Activated CD8-positive, alpha-beta T cell treated with anti-CD3 and anti-CD28 coated beads for 36 hours (primary cell): ENCODE measurements at regions of chr11 and their contacts with region 1.

Region 1: GRCh38 chr11:65095974-65096806 is at the start of gene VPS51:
- DNase-seq: peak; percentile 94
- ATAC-seq: peak; percentile 95
- H3K4me3 Mint-ChIP-seq: peak within 1 kb of the TSS; percentile 93
- H3K27ac Mint-ChIP-seq: peak within 1 kb of the TSS; percentile 96
- H3K4me1 Mint-ChIP-seq: peaks cover 15% of the 10 kb centered on the region
- H3K27me3 Mint-ChIP-seq: no peaks in the 10 kb centered on the region
- CTCF ChIP-seq: no peak
- total RNA-seq, gene VPS51: 103 TPM

Region 2: DNA sequence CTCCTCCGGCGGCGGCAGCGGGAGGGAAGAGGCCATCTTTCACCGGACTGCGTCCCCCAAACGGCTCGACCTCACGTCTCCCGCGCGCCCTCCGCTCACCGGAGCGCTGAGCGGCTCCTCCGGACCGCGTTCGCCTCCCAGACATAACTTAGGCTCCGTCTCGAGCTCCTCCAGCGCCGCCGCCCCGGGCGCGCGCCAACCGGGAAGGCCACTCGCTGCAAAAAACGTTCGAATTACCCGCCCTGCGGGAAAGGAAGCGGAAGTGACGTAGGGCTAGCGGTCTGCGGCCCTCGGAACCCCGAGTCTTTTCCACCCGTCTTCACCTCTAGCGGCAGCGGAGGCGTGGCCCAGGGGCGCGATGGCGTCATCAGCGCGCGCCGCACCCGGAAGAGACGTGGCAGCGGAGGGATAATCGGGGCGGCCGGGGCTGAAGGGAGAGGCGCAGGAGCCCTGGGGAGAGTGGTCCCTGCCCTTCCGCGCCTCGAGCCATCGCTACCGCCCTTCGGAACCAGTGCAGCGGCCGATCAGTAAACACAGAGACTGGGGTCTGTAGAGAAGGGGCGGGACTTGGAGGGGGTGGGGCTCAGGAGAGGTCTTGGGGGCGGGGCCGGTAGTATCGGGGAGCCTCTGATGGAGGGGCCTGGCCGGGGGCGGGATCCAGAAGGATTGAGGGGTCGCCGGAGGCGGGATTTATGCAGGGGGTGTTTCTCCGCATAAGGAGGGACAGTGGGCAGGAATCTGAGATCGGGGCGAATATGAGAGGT is 12.2 kb before region 1 on chr11 and contains the starts of genes CDCA5 and ZFPL1:
- CTCF ChIA-PET with region 1: interaction called, 3 read pairs
- POLR2A ChIA-PET with region 1: interaction called, 24 read pairs
- intact Hi-C with region 1: no loop called
- DNase-seq: peak; percentile 96
- ATAC-seq: peak; percentile 82
- H3K4me3 Mint-ChIP-seq: peak within 1 kb of the TSS; percentile 99
- H3K27ac Mint-ChIP-seq: peak within 1 kb of the TSS; percentile 98
- H3K4me1 Mint-ChIP-seq: peaks cover 35% of the 10 kb centered on the region
- H3K27me3 Mint-ChIP-seq: no peaks in the 10 kb centered on the region
- CTCF ChIP-seq: no peak
- total RNA-seq, gene CDCA5: 112 TPM
- total RNA-seq, gene ZFPL1: 27.1 to 28.2 TPM

Region 3: GRCh38 chr11:65111744-65112414 is 15.7 kb after region 1 on chr11 and contains the start of gene TM7SF2:
- CTCF ChIA-PET with region 1: interaction called, 115 read pairs
- POLR2A ChIA-PET with region 1: interaction called, 294 read pairs
- intact Hi-C with region 1: no loop called
- DNase-seq: peak; percentile 98
- ATAC-seq: peak; percentile 77
- H3K4me3 Mint-ChIP-seq: peak within 1 kb of the TSS; percentile 86
- H3K27ac Mint-ChIP-seq: peak within 1 kb of the TSS; percentile 84
- H3K4me1 Mint-ChIP-seq: peaks cover 43% of the 10 kb centered on the region
- H3K27me3 Mint-ChIP-seq: no peaks in the 10 kb centered on the region
- CTCF ChIP-seq: no peak
- total RNA-seq, gene TM7SF2: 12.4 to 17.5 TPM

Region 4: GRCh38 chr11:65117216-65118096 is 21.3 kb after region 1 on chr11 and contains the start of gene ZNHIT2:
- CTCF ChIA-PET with region 1: interaction called, 115 read pairs
- POLR2A ChIA-PET with region 1: interaction called, 294 read pairs
- intact Hi-C with region 1: no loop called
- DNase-seq: peak; percentile 100
- ATAC-seq: peak; percentile 75
- H3K4me3 Mint-ChIP-seq: peak within 1 kb of the TSS; percentile 87
- H3K27ac Mint-ChIP-seq: peak within 1 kb of the TSS; percentile 95
- H3K4me1 Mint-ChIP-seq: peaks cover 53% of the 10 kb centered on the region
- H3K27me3 Mint-ChIP-seq: no peaks in the 10 kb centered on the region
- CTCF ChIP-seq: peak; percentile 79
- total RNA-seq, gene ZNHIT2: 11.5 to 12.7 TPM